B cell (primary cell): ENCODE measurements at regions of chr12 and their contacts with region 1.

Region 1: GRCh38 chr12:49336645-49337584 is at the start of gene C1QL4:
- DNase-seq: peak; percentile 91
- ATAC-seq: peak; percentile 98
- H3K4me3 ChIP-seq: peak within 1 kb of the TSS in 4 of 5 experiments; percentile 21 to 50 (median 46)
- H3K4me3 Mint-ChIP-seq: peak within 1 kb of the TSS; percentile 80
- H3K27ac ChIP-seq: no peak within 1 kb of the TSS
- H3K27ac Mint-ChIP-seq: peak within 1 kb of the TSS; percentile 61
- H3K4me1 ChIP-seq: peaks cover 38 to 39% of the 10 kb centered on the region in 2 donors
- H3K4me1 Mint-ChIP-seq: peaks cover 38% of the 10 kb centered on the region
- H3K27me3 ChIP-seq: peaks cover 0 to 86% (median 49%) of the 10 kb centered on the region in 4 experiments
- H3K27me3 Mint-ChIP-seq: peaks cover 66% of the 10 kb centered on the region
- CTCF ChIP-seq: peak; percentile 99
- total RNA-seq, gene C1QL4: not detected in 2 replicates

Region 2: DNA sequence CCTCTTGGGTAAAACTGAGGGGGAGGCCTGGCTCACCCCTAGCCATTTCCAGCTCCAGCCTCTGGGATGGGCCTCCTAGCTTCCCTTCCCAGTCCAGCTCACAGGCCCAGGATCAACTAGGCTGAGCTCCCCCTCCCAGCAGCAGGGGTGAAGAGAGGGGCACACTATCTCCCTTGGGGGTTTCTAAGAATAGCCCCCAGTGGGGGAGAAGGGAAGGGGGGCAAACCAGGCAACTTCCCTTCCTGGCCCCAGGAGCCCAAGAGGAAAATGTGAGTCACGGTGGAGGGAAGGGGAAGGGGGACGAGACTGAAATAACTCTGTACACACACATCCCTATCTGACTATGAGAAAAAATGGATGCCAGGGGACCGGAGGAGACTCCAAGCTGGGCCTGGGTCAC is 557.0 kb before region 1 on chr12:
- CTCF ChIA-PET with region 1: no interaction called
- POLR2A ChIA-PET with region 1: no interaction called
- intact Hi-C with region 1: no loop called
- DNase-seq: no peak
- ATAC-seq: no peak
- H3K4me3 ChIP-seq: no peak overlapping the region
- H3K4me3 Mint-ChIP-seq: no peak overlapping the region
- H3K27ac ChIP-seq: no peak overlapping the region
- H3K27ac Mint-ChIP-seq: no peak overlapping the region
- H3K4me1 ChIP-seq: no peaks in the 10 kb centered on the region
- H3K4me1 Mint-ChIP-seq: no peaks in the 10 kb centered on the region
- H3K27me3 ChIP-seq: peaks cover 0 to 3% (median 0%) of the 10 kb centered on the region in 4 experiments
- H3K27me3 Mint-ChIP-seq: peaks cover 15% of the 10 kb centered on the region
- CTCF ChIP-seq: no peak

Region 3: DNA sequence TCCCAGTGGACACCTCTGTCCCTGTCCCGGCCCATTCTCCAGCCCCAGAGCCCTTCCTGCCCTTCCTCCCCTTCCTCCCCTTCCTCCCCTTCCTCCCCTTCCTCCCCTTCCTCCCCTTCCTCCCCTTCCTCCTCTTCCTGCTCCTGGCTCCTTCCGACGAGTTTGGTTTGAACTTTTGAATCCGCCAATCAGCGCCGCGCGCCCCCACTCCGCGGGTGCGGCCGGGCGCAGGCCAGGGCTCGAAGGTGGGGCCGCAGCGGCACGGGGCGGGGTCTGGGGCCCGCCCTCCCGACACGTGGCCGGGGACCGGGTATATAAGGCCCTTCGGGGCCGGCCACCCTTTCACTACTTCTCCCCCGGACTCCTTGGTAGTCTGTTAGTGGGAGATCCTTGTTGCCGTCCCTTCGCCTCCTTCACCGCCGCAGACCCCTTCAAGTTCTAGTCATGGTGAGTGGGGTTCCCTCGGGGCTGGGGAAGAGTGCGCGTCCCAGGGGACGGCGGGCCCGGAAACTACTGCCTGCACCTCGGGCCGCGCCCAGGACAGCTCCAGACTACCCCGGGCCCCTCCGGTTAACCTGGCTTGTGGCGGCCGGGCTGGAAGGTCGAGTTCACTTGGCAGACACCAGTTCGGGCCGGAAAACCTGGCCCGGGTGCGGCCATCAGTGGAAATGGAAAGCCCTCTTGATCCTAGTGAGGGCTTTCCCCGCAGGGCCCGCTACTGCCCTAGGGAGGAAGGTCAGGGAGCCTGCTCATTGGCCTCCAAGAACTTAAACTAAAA is 72.0 kb before region 1 on chr12 and contains the start of gene TUBA1C:
- CTCF ChIA-PET with region 1: interaction called, 4 read pairs
- POLR2A ChIA-PET with region 1: interaction called, 6 read pairs
- intact Hi-C with region 1: loop called (anchors 2 kb)
- DNase-seq: peak; percentile 92
- ATAC-seq: peak; percentile 93
- H3K4me3 ChIP-seq: peak within 1 kb of the TSS; percentile 42 to 98 (median 83)
- H3K4me3 Mint-ChIP-seq: peak within 1 kb of the TSS; percentile 97
- H3K27ac ChIP-seq: peak within 1 kb of the TSS; percentile 80 to 82
- H3K27ac Mint-ChIP-seq: peak within 1 kb of the TSS; percentile 94
- H3K4me1 ChIP-seq: peaks cover 4 to 12% of the 10 kb centered on the region in 2 donors
- H3K4me1 Mint-ChIP-seq: peaks cover 20% of the 10 kb centered on the region
- H3K27me3 ChIP-seq: no peaks in the 10 kb centered on the region
- H3K27me3 Mint-ChIP-seq: no peaks in the 10 kb centered on the region
- CTCF ChIP-seq: no peak
- total RNA-seq, gene TUBA1C: 34.9 and 35.2 TPM in 2 replicates

Region 4: DNA sequence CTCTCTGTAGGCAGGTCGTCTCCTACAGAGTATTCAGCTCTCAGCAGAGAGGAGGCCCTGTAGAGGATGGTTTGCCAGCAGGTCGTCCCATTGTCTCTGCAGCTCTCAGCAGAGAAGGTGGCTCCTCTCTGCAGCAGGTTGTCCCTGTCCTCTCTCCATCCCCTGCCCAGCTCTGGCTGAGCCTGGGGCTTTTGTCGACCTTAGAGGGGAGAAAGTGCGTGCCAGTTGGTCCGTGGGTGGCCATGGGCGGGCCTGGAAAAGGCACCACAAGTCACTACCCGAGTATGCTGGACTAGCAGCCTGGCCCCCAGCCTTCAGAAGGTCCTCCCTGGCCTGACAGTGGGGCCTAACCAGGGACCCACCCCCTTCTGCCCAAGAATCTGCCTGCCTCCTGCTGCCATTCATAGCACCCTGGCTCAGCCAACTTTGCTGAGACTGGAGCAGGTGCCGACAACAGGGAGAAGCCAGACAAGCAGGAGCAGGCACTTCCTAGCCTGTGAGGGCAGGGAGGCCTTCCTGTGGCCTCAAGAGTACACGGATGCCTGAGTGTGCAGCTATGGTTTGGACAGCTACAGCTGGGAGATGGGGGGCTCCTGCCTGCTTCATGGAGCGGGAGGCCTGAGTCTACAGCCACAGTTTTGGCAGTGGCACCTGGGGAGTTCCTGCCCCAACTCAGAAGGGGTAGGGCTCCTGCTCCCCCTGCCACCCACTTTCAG is 142.2 kb after region 1 on chr12:
- CTCF ChIA-PET with region 1: no interaction called
- POLR2A ChIA-PET with region 1: no interaction called
- intact Hi-C with region 1: no loop called
- DNase-seq: no peak
- ATAC-seq: no peak
- H3K4me3 ChIP-seq: no peak overlapping the region
- H3K4me3 Mint-ChIP-seq: no peak overlapping the region
- H3K27ac ChIP-seq: no peak overlapping the region
- H3K27ac Mint-ChIP-seq: no peak overlapping the region
- H3K4me1 ChIP-seq: no peaks in the 10 kb centered on the region
- H3K4me1 Mint-ChIP-seq: peaks cover 2% of the 10 kb centered on the region
- H3K27me3 ChIP-seq: no peaks in the 10 kb centered on the region
- H3K27me3 Mint-ChIP-seq: no peaks in the 10 kb centered on the region
- CTCF ChIP-seq: no peak

Region 5: GRCh38 chr12:49588721-49589516 is 252.0 kb after region 1 on chr12:
- CTCF ChIA-PET with region 1: no interaction called
- POLR2A ChIA-PET with region 1: no interaction called
- intact Hi-C with region 1: no loop called
- DNase-seq: no peak
- ATAC-seq: no peak
- H3K4me3 ChIP-seq: no peak overlapping the region
- H3K4me3 Mint-ChIP-seq: no peak overlapping the region
- H3K27ac ChIP-seq: no peak overlapping the region
- H3K27ac Mint-ChIP-seq: no peak overlapping the region
- H3K4me1 ChIP-seq: no peaks in the 10 kb centered on the region
- H3K4me1 Mint-ChIP-seq: no peaks in the 10 kb centered on the region
- H3K27me3 ChIP-seq: no peaks in the 10 kb centered on the region
- H3K27me3 Mint-ChIP-seq: no peaks in the 10 kb centered on the region
- CTCF ChIP-seq: no peak